ENCODE measurements at regions of chr2 and their contacts with region 1.

Region 1: GRCh38 chr2:64749446-64749845 is 95.7 kb upstream of the SERTAD2 start:
- DNase-seq: peak; percentile 53

Region 2: GRCh38 chr2:64644177-64645004 is 105.1 kb before region 1 on chr2:
- in situ Hi-C with region 1: loop called (anchors 5 kb)
- DNase-seq: peak; percentile 54

Measured in G401 (cell line).